ENCODE measurements at regions of chr5 and their contacts with region 1.

Region 1: DNA sequence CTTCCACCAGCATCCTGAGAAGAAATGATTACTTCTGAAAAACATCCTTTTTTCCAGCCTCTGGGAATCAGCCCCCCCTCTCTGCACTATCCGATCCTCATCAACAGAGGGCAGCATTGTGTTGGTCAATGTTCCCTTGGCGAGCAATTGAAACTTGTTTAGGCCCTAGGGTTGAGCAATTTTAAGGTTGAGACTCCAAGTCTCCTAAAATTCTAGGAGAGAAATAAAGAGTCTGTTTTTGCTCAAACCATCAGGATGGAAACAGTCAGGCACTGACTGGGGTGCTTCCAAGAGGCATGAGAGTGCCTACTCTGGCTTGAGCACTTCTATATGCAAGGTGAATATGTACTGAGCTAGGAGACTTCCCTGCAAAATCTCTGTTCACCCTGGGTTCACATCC is 12.4 kb upstream of the CYFIP2 start:
- DNase-seq: no peak
- H3K4me3 Mint-ChIP-seq: peak overlapping the region; percentile 16
- H3K27ac Mint-ChIP-seq: peak overlapping the region; percentile 95
- H3K4me1 Mint-ChIP-seq: peaks cover 97% of the 10 kb centered on the region
- H3K27me3 Mint-ChIP-seq: no peaks in the 10 kb centered on the region

Region 2: GRCh38 chr5:157219491-157220271 is 33.9 kb before region 1 on chr5:
- CTCF ChIA-PET with region 1: interaction called, 10 read pairs
- DNase-seq: peak; percentile 39
- H3K4me3 Mint-ChIP-seq: peak overlapping the region; percentile 56
- H3K27ac Mint-ChIP-seq: peak overlapping the region; percentile 94
- H3K4me1 Mint-ChIP-seq: peaks cover 95% of the 10 kb centered on the region
- H3K27me3 Mint-ChIP-seq: no peaks in the 10 kb centered on the region

Region 3: GRCh38 chr5:157263496-157264090 is 10.0 kb after region 1 on chr5:
- CTCF ChIA-PET with region 1: interaction called, 14 read pairs
- DNase-seq: no peak
- H3K4me3 Mint-ChIP-seq: no peak overlapping the region
- H3K27ac Mint-ChIP-seq: peak overlapping the region; percentile 34
- H3K4me1 Mint-ChIP-seq: peaks cover 62% of the 10 kb centered on the region
- H3K27me3 Mint-ChIP-seq: peaks cover 3% of the 10 kb centered on the region

Region 4: DNA sequence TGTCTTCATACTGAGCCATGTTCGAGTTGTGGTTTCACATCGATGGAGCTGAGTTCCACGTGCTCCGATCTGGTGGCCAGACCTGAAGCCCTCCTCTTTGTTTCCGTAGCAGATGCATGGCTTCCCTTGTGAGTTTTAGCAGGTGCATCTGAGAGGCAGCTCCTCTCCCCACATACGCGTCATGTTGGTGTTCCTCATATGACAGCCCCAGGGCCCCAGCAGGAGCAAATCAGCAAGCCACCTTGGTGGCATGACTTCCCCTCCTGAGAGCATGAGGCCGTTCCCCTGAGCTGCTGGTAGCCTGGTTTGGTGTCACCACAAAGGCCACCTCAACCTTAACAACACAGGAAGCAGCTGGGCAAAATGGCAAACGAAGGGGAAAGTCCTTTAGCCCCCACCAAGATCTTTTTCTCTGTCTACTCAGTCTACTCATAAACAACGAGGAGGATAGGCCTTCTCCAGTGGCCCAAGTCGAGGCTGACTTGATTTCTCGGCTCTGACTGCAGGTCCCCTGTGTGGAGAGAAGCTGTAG is 18.3 kb after region 1 on chr5:
- CTCF ChIA-PET with region 1: interaction called, 27 read pairs
- DNase-seq: peak; percentile 95
- H3K4me3 Mint-ChIP-seq: peak overlapping the region; percentile 85
- H3K27ac Mint-ChIP-seq: peak overlapping the region; percentile 99
- H3K4me1 Mint-ChIP-seq: peaks cover 76% of the 10 kb centered on the region
- H3K27me3 Mint-ChIP-seq: no peaks in the 10 kb centered on the region

Region 5: GRCh38 chr5:157303667-157304327 is 50.2 kb after region 1 on chr5:
- CTCF ChIA-PET with region 1: interaction called, 13 read pairs
- DNase-seq: peak; percentile 80
- H3K4me3 Mint-ChIP-seq: peak overlapping the region; percentile 75
- H3K27ac Mint-ChIP-seq: peak overlapping the region; percentile 99
- H3K4me1 Mint-ChIP-seq: peaks cover 76% of the 10 kb centered on the region
- H3K27me3 Mint-ChIP-seq: no peaks in the 10 kb centered on the region

Region 6: GRCh38 chr5:157312492-157312891 is 58.9 kb after region 1 on chr5:
- CTCF ChIA-PET with region 1: interaction called, 13 read pairs
- DNase-seq: peak; percentile 71
- H3K4me3 Mint-ChIP-seq: peak overlapping the region; percentile 2
- H3K27ac Mint-ChIP-seq: peak overlapping the region; percentile 19
- H3K4me1 Mint-ChIP-seq: peaks cover 39% of the 10 kb centered on the region
- H3K27me3 Mint-ChIP-seq: no peaks in the 10 kb centered on the region

Measured in activated naive CD4-positive, alpha-beta T cell treated with anti-CD3 and anti-CD28 coated beads, Interleukin-2, amount 10 ng/mL, durations not matched to agents 7 days and 5 days (primary cell).